ENCODE measurements at regions of chr3 and their contacts with region 1.

Region 1: GRCh38 chr3:20028818-20029430 is 11.3 kb upstream of the KAT2B start:
- DNase-seq: no peak
- H3K4me3 ChIP-seq: no peak overlapping the region
- H3K4me3 Mint-ChIP-seq: no peak overlapping the region
- H3K27ac ChIP-seq: no peak overlapping the region
- H3K27ac Mint-ChIP-seq: no peak overlapping the region
- H3K4me1 ChIP-seq: no peaks in the 10 kb centered on the region
- H3K4me1 Mint-ChIP-seq: peaks cover 3% of the 10 kb centered on the region
- H3K27me3 ChIP-seq: no peaks in the 10 kb centered on the region
- H3K27me3 Mint-ChIP-seq: peaks cover 0 to 8% (median 2%) of the 10 kb centered on the region in 3 donors
- CTCF ChIP-seq: no peak

Region 2: DNA sequence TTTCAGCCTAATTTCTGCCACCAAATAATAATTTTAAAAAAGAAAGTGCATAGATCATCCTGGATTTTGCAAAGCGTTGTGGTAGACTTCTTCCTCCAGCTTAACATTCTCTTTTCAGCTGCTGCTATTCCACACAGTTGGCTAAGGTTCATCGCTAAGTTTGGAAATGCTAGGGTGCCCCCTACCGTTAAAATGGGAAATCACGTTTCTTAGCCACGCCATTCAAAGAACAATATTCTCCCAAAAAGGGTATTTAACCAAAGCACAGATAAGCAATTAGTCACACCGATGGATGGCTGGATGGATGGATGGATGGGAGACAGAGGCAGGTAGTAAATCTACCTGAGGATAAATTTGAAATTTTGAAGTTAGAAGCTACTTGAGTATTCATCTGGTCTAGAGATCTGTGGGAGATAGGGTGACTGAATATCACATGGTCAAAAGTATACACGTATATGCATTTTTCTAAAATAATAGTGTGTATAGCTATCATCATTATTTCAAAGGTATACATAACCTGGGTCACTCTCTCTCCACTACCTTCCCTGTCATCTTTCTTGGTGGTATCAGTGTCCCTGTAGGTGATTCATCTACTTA is 162.1 kb before region 1 on chr3:
- intact Hi-C with region 1: no loop called
- DNase-seq: peak; percentile 8 to 29 (median 19)
- H3K4me3 ChIP-seq: no peak overlapping the region
- H3K4me3 Mint-ChIP-seq: no peak overlapping the region
- H3K27ac ChIP-seq: no peak overlapping the region
- H3K27ac Mint-ChIP-seq: no peak overlapping the region
- H3K4me1 ChIP-seq: no peaks in the 10 kb centered on the region
- H3K4me1 Mint-ChIP-seq: no peaks in the 10 kb centered on the region
- H3K27me3 ChIP-seq: no peaks in the 10 kb centered on the region
- H3K27me3 Mint-ChIP-seq: no peaks in the 10 kb centered on the region
- CTCF ChIP-seq: peak; percentile 84

Region 3: DNA sequence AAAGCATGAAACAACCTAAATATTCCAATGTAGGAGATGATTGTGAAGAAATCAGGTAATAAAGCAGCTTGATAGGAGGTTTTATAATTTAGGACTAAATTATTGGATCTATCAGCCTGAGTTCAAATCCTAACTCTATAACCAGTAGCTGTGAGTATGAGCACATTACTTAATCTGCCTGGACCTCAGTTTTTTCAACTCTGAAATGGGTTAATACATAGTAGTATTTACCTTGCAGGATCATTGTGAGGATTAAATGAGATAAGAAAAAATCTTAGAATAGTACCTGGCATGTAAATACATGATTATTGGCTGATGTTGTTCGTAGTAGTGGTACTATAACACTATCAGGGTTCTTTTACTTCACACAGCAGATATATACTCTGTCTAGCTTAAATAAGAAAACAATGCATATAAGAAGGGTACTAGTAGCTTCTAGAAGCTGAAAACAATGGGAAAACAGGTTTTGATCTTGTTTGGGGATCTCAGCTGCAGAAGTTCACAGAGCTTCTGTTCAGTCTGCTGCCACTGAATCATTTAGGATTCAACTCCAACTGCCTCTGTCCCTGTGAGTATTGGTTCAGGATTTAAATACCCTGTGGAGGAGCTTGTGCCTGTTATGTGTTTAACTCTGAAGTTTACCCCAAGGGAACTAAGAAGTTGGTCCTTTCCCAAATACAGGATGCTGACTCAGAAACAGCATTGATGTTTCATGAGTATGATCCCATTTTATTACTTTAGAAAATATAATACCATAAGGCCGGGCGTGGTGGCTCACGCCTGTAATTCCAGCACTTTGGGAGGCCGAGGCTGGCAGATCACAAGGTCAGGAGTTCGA is 45.5 kb after region 1 on chr3:
- intact Hi-C with region 1: loop called in 1 of 2 experiments (anchors 2 kb)
- DNase-seq: no peak
- H3K4me3 ChIP-seq: no peak overlapping the region
- H3K4me3 Mint-ChIP-seq: no peak overlapping the region
- H3K27ac ChIP-seq: no peak overlapping the region
- H3K27ac Mint-ChIP-seq: no peak overlapping the region
- H3K4me1 ChIP-seq: no peaks in the 10 kb centered on the region
- H3K4me1 Mint-ChIP-seq: no peaks in the 10 kb centered on the region
- H3K27me3 ChIP-seq: no peaks in the 10 kb centered on the region
- H3K27me3 Mint-ChIP-seq: no peaks in the 10 kb centered on the region
- CTCF ChIP-seq: no peak